ENCODE measurements at regions of chr5 and their contacts with region 1.

Region 1: GRCh38 chr5:175718401-175719108 is 60.7 kb downstream of the HRH2 start:
- DNase-seq: peak; percentile 51 to 82 (median 72)
- H3K4me3 ChIP-seq: no peak overlapping the region
- H3K27ac ChIP-seq: no peak overlapping the region
- H3K4me1 ChIP-seq: no peaks in the 10 kb centered on the region
- H3K27me3 ChIP-seq: peaks cover 0 to 4% (median 0%) of the 10 kb centered on the region in 5 experiments

Region 2: DNA sequence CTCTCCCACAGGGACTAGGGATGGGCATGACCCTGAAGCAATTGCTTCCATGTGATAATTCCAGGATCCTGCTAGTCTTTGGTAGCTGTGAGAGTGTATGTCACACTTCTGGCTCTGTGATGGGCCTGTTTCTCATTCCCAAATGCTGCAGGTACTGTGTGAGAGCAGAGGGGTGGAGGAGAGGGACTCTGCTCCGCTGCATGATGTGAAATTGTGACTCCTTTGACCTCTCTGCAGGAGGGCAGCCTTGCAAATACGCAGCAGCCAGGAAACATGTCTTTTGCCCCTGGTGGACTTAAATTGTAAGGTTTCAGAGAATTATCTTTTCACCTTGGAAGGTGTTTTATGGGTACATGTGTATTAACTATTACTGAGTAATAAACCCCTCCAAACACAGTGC is 178.6 kb before region 1 on chr5:
- CTCF ChIA-PET with region 1: interaction called, 81 read pairs
- POLR2A ChIA-PET with region 1: no interaction called
- DNase-seq: no peak
- H3K4me3 ChIP-seq: no peak overlapping the region
- H3K27ac ChIP-seq: no peak overlapping the region
- H3K4me1 ChIP-seq: peaks cover 0 to 13% (median 0%) of the 10 kb centered on the region in 4 experiments
- H3K27me3 ChIP-seq: peaks cover 0 to 2% (median 0%) of the 10 kb centered on the region in 5 experiments

Region 3: GRCh38 chr5:175696139-175696854 is 22.3 kb before region 1 on chr5:
- CTCF ChIA-PET with region 1: interaction called, 20 read pairs
- POLR2A ChIA-PET with region 1: no interaction called
- DNase-seq: peak; percentile 78 to 85 (median 84)
- H3K4me3 ChIP-seq: peak overlapping the region in 2 of 7 experiments; percentile 12 to 19
- H3K27ac ChIP-seq: no peak overlapping the region
- H3K4me1 ChIP-seq: peaks cover 0 to 55% (median 39%) of the 10 kb centered on the region in 4 experiments
- H3K27me3 ChIP-seq: no peaks in the 10 kb centered on the region

Region 4: GRCh38 chr5:175729829-175730277 is 11.3 kb after region 1 on chr5:
- CTCF ChIA-PET with region 1: interaction called, 19 read pairs
- POLR2A ChIA-PET with region 1: no interaction called
- DNase-seq: peak; percentile 86 to 90 (median 87)
- H3K4me3 ChIP-seq: peak overlapping the region in 2 of 7 experiments; percentile 16 to 28
- H3K27ac ChIP-seq: no peak overlapping the region
- H3K4me1 ChIP-seq: peaks cover 0 to 7% (median 5%) of the 10 kb centered on the region in 4 experiments
- H3K27me3 ChIP-seq: peaks cover 2 to 24% (median 9%) of the 10 kb centered on the region in 5 experiments

Region 5: GRCh38 chr5:175853573-175854230 is 135.1 kb after region 1 on chr5:
- CTCF ChIA-PET with region 1: no interaction called
- POLR2A ChIA-PET with region 1: no interaction called
- DNase-seq: peak in 2 of 3 donors; percentile 7 to 10
- H3K4me3 ChIP-seq: no peak overlapping the region
- H3K27ac ChIP-seq: no peak overlapping the region
- H3K4me1 ChIP-seq: peaks cover 0 to 5% (median 3%) of the 10 kb centered on the region in 4 experiments
- H3K27me3 ChIP-seq: peaks cover 0 to 23% (median 2%) of the 10 kb centered on the region in 5 experiments

Measured in common myeloid progenitor, CD34-positive (primary cell).